WTC11 (cell line): ENCODE measurements at regions of chr7 and their contacts with region 1.

Region 1: DNA sequence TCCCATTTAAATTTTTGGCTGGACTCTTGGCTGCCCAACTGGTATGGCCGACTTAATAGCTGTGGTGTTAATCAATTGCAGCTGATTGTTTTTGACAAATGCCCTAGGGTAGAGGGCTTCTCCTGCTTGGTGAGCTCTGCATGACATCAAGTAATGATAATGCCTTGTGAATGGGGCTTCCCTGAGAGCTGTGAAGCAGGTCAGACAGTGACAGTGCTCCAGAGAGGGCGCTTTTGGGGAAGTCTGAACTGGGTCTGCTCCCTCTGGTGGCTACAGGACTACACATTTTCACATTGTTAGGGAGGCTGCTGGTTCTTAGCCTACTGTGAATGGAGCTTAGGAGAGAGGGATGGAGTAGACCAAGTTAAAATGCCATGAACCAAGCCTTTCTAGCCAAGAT is 98.8 kb downstream of the SDK1 start:
- DNase-seq: peak; percentile 78
- ATAC-seq: peak; percentile 100
- H3K4me3 Mint-ChIP-seq: no peak overlapping the region
- H3K27ac Mint-ChIP-seq: no peak overlapping the region
- H3K4me1 Mint-ChIP-seq: peaks cover 23% of the 10 kb centered on the region
- H3K27me3 Mint-ChIP-seq: no peaks in the 10 kb centered on the region
- CTCF ChIP-seq: no peak

Region 2: DNA sequence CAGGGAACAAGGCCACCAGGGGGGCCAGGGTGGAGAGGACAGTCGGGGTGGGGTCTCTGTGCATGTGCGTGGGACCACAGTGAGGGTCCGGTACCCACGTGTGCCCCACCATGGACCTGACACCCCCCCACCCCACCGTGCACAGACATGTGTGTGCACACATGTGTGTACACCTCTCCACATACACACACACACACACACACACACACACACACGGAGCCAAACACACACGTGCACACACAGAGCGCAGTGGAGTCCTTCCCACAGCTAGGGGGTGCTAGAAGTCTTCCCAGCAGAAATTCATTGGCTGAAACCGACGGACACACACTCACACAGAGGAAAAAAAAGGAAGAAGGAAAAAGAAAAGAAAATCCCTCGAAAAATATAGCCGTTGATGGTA is 513.0 kb before region 1 on chr7:
- CTCF ChIA-PET with region 1: interaction called, 10 read pairs
- POLR2A ChIA-PET with region 1: no interaction called
- DNase-seq: peak; percentile 59
- ATAC-seq: peak; percentile 82
- H3K4me3 Mint-ChIP-seq: no peak overlapping the region
- H3K27ac Mint-ChIP-seq: no peak overlapping the region
- H3K4me1 Mint-ChIP-seq: peaks cover 16% of the 10 kb centered on the region
- H3K27me3 Mint-ChIP-seq: no peaks in the 10 kb centered on the region
- CTCF ChIP-seq: peak; percentile 66

Region 3: DNA sequence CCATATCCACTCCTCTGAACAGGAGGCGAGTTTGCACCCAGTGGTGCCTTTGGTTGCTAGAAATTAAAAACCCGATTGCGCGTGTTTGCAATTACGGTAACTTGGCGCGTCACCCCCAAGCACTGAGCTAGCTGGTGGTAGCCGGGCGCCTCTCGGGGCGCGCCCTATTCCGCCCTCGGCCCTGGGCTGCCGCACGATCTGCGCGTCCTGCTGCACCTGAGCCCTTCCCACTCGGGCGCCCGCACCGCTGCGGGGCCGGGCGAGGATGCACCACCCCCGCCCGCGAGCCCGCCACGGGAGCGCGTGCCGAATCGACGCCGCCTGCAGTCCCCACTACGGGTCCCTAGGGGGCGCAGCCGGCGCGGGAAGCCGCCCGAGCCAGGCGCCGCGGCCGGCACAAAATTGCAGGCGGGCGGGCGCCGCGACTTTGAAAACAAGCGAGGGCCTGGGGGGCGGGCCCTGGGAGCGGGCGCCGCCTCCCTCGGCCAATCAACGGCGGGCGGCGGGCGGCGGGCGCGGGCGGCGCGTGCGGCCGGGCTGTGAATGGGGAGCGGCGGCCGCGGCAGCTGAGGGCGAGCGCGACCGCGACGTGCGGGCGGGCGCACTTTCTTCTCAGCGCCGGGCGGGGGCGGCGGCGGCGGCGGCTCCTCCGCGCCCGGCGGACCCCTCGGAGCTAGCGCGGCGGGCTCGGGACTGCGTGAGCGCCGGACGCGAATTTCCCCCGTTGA is 99.0 kb before region 1 on chr7 and contains the start of gene SDK1:
- CTCF ChIA-PET with region 1: interaction called, 78 read pairs
- POLR2A ChIA-PET with region 1: no interaction called
- DNase-seq: peak; percentile 89
- ATAC-seq: peak; percentile 83
- H3K4me3 Mint-ChIP-seq: peak within 1 kb of the TSS; percentile 78
- H3K27ac Mint-ChIP-seq: no peak within 1 kb of the TSS
- H3K4me1 Mint-ChIP-seq: peaks cover 37% of the 10 kb centered on the region
- H3K27me3 Mint-ChIP-seq: peaks cover 24% of the 10 kb centered on the region
- CTCF ChIP-seq: peak; percentile 96
- total RNA-seq, gene SDK1: 9.3 to 10.5 TPM (median 10.0 TPM) in 3 replicates

Region 4: DNA sequence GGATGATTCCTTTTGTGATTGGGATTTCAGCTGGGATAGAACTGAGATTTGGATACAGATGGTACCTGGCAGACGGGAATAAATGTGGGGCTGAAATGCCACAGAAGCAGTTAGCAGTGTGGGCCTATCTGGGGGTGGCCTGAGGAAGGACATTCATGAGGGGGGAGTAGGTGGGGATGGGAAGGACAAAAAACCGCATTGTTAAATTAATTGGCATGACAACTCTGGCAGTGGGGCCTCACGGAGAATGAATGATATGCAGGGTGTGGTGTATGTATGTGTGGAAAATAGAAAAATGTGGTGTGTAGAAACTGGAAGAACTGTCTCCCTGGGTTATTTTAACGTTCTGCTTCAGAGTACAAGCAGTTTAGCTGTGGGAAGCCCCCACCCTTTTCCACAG is 81.0 kb before region 1 on chr7:
- CTCF ChIA-PET with region 1: interaction called, 20 read pairs
- POLR2A ChIA-PET with region 1: no interaction called
- DNase-seq: no peak
- ATAC-seq: no peak
- H3K4me3 Mint-ChIP-seq: no peak overlapping the region
- H3K27ac Mint-ChIP-seq: no peak overlapping the region
- H3K4me1 Mint-ChIP-seq: peaks cover 29% of the 10 kb centered on the region
- H3K27me3 Mint-ChIP-seq: no peaks in the 10 kb centered on the region
- CTCF ChIP-seq: no peak

Region 5: DNA sequence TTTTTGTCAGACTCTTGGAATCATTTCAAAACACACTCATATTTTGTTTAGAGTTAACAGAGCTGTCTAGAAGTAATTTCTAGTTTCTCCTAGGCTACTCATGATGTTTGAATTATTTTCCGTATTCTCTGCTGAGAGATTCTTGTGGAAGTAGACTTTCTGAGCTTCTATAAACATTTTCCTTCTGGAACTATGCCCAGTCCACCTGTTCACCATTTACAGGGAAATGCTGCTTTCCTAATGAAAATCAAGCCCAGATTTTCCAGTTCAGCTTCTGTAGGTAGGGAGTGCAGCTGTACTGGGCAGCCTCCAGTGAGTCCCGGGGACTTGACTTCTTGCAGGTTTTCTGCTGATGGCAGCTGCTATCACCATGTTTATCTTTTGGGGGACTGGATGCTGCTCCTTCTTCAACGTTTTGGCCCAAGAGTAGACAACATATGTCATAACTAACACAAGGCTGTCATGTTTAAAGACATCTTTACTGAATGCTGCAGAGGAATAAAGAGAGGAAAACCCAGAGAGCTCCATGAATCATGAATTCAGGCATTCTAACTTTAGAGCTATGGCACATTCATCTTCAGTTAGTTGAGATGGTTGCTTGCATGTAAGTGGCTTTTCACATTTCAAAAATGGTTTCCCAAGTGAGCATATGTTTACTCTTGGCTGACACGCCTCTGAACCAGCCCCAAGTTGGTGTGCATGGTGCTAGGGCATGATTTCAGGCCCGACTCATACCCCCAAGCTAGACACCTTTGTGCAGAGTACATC is 13.3 kb before region 1 on chr7:
- CTCF ChIA-PET with region 1: interaction called, 37 read pairs
- POLR2A ChIA-PET with region 1: no interaction called
- DNase-seq: no peak
- ATAC-seq: no peak
- H3K4me3 Mint-ChIP-seq: no peak overlapping the region
- H3K27ac Mint-ChIP-seq: no peak overlapping the region
- H3K4me1 Mint-ChIP-seq: peaks cover under 1% of the 10 kb centered on the region; the same call in 1 of the 2 replicates
- H3K27me3 Mint-ChIP-seq: no peaks in the 10 kb centered on the region
- CTCF ChIP-seq: no peak

Region 6: GRCh38 chr7:3501671-3502070 is 101.8 kb after region 1 on chr7:
- CTCF ChIA-PET with region 1: no interaction called
- POLR2A ChIA-PET with region 1: no interaction called
- DNase-seq: no peak
- ATAC-seq: no peak
- H3K4me3 Mint-ChIP-seq: no peak overlapping the region
- H3K27ac Mint-ChIP-seq: no peak overlapping the region
- H3K4me1 Mint-ChIP-seq: peaks cover 4% of the 10 kb centered on the region
- H3K27me3 Mint-ChIP-seq: no peaks in the 10 kb centered on the region
- CTCF ChIP-seq: no peak